CD4-positive, alpha-beta memory T cell (primary cell): ENCODE measurements at regions of chr21 and their contacts with region 1.

Region 1: GRCh38 chr21:42400525-42400924 is 3.2 kb upstream of the UBASH3A start:
- DNase-seq: peak in 1 of 5 donors; percentile 61
- H3K4me3 ChIP-seq: no peak overlapping the region
- H3K4me3 Mint-ChIP-seq: peak overlapping the region in 5 of 8 donors; percentile 19 to 71 (median 53)
- H3K27ac ChIP-seq: no peak overlapping the region
- H3K27ac Mint-ChIP-seq: peak overlapping the region; percentile 42 to 92 (median 77)
- H3K4me1 ChIP-seq: peaks cover 57% of the 10 kb centered on the region
- H3K4me1 Mint-ChIP-seq: peaks cover 40 to 81% (median 52%) of the 10 kb centered on the region in 4 donors
- H3K27me3 ChIP-seq: no peaks in the 10 kb centered on the region
- H3K27me3 Mint-ChIP-seq: no peaks in the 10 kb centered on the region

Region 2: GRCh38 chr21:42209819-42210479 is 190.6 kb before region 1 on chr21:
- CTCF ChIA-PET with region 1: no interaction called
- POLR2A ChIA-PET with region 1: no interaction called
- intact Hi-C with region 1: no loop called
- DNase-seq: no peak
- H3K4me3 ChIP-seq: no peak overlapping the region
- H3K4me3 Mint-ChIP-seq: no peak overlapping the region
- H3K27ac ChIP-seq: no peak overlapping the region
- H3K27ac Mint-ChIP-seq: no peak overlapping the region
- H3K4me1 ChIP-seq: no peaks in the 10 kb centered on the region
- H3K4me1 Mint-ChIP-seq: peaks cover 0 to 3% (median under 1%) of the 10 kb centered on the region in 4 donors
- H3K27me3 ChIP-seq: no peaks in the 10 kb centered on the region
- H3K27me3 Mint-ChIP-seq: no peaks in the 10 kb centered on the region

Region 3: DNA sequence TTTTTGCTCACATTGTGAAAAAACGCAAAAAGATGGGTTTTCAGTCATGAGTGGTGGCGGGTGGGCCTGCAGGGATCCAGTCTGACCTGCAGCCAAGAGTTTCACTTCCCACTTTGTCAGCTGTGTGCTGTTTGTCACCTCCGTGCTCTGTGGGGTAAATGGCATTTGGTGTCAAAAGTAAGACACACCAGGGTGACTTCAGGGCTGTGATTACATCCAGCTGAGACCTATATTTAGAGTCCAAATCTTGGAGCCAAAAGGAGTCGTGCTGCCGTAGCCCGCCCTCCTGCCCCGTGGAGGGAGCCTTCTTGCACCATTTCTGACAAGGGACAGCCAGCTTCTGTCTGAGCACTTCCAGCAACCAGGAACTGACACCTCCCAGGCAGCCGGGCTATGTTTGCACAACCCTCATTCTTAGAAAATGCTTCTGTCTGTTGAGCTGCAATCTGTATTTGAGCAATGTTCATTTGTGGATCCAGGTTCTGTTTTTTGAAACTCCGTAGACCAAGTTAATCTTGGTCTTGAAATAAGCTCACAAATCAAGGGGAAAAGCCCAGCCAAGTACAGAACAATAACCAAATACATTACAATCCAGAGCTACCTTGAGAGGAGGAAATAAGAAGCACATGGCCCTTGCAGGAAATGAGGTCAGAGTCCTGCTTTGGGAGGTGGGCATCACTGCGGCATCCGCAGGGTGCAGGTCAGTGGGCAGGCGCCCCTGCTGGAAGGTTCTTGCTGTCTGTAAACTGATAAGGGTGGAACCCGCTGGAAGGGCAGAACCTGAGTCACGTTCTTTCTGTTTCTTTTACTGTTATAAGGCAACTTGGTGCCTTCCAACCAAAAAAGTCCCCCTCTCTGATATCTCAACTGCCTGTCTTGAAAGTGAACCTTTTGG is 167.2 kb before region 1 on chr21:
- CTCF ChIA-PET with region 1: no interaction called
- POLR2A ChIA-PET with region 1: interaction called, 5 read pairs
- intact Hi-C with region 1: loop called (anchors 10 kb)
- DNase-seq: peak; percentile 82 to 98 (median 86)
- H3K4me3 ChIP-seq: no peak overlapping the region
- H3K4me3 Mint-ChIP-seq: peak overlapping the region; percentile 66 to 85 (median 78)
- H3K27ac ChIP-seq: peak overlapping the region; percentile 96
- H3K27ac Mint-ChIP-seq: peak overlapping the region; percentile 93 to 99 (median 97)
- H3K4me1 ChIP-seq: peaks cover 96% of the 10 kb centered on the region
- H3K4me1 Mint-ChIP-seq: peaks cover 61 to 99% (median 89%) of the 10 kb centered on the region in 4 donors
- H3K27me3 ChIP-seq: no peaks in the 10 kb centered on the region
- H3K27me3 Mint-ChIP-seq: no peaks in the 10 kb centered on the region

Region 4: GRCh38 chr21:42319376-42319775 is 81.1 kb before region 1 on chr21:
- CTCF ChIA-PET with region 1: no interaction called
- POLR2A ChIA-PET with region 1: no interaction called
- intact Hi-C with region 1: no loop called
- DNase-seq: no peak
- H3K4me3 ChIP-seq: no peak overlapping the region
- H3K4me3 Mint-ChIP-seq: no peak overlapping the region
- H3K27ac ChIP-seq: no peak overlapping the region
- H3K27ac Mint-ChIP-seq: peak overlapping the region in 1 of 7 donors; percentile 19
- H3K4me1 ChIP-seq: peaks cover 5% of the 10 kb centered on the region
- H3K4me1 Mint-ChIP-seq: peaks cover 0 to 11% (median 4%) of the 10 kb centered on the region in 4 donors
- H3K27me3 ChIP-seq: no peaks in the 10 kb centered on the region
- H3K27me3 Mint-ChIP-seq: peaks cover 5 to 10% of the 10 kb centered on the region in 2 donors

Region 5: GRCh38 chr21:42337830-42338728 is 62.4 kb before region 1 on chr21:
- CTCF ChIA-PET with region 1: interaction called, 8 read pairs
- POLR2A ChIA-PET with region 1: interaction called, 13 read pairs
- intact Hi-C with region 1: no loop called
- DNase-seq: peak; percentile 74 to 81 (median 78)
- H3K4me3 ChIP-seq: no peak overlapping the region
- H3K4me3 Mint-ChIP-seq: peak overlapping the region in 3 of 8 donors; percentile 7 to 41 (median 38)
- H3K27ac ChIP-seq: no peak overlapping the region
- H3K27ac Mint-ChIP-seq: peak overlapping the region in 6 of 7 donors; percentile 18 to 82 (median 50)
- H3K4me1 ChIP-seq: peaks cover 10% of the 10 kb centered on the region
- H3K4me1 Mint-ChIP-seq: peaks cover 5 to 14% (median 8%) of the 10 kb centered on the region in 4 donors
- H3K27me3 ChIP-seq: no peaks in the 10 kb centered on the region
- H3K27me3 Mint-ChIP-seq: peaks cover 2 to 4% of the 10 kb centered on the region in 2 donors

Region 6: GRCh38 chr21:42381334-42381984 is 19.1 kb before region 1 on chr21:
- CTCF ChIA-PET with region 1: interaction called, 15 read pairs
- POLR2A ChIA-PET with region 1: interaction called, 21 read pairs
- intact Hi-C with region 1: no loop called
- DNase-seq: peak in 3 of 5 donors; percentile 15 to 50 (median 24)
- H3K4me3 ChIP-seq: no peak overlapping the region
- H3K4me3 Mint-ChIP-seq: peak overlapping the region in 1 of 8 donors; percentile 10
- H3K27ac ChIP-seq: no peak overlapping the region
- H3K27ac Mint-ChIP-seq: peak overlapping the region in 2 of 7 donors; percentile 3 to 70
- H3K4me1 ChIP-seq: peaks cover 16% of the 10 kb centered on the region
- H3K4me1 Mint-ChIP-seq: peaks cover 9 to 18% (median 10%) of the 10 kb centered on the region in 4 donors
- H3K27me3 ChIP-seq: no peaks in the 10 kb centered on the region
- H3K27me3 Mint-ChIP-seq: no peaks in the 10 kb centered on the region

Region 7: GRCh38 chr21:42414928-42415769 is 14.6 kb after region 1 on chr21:
- CTCF ChIA-PET with region 1: interaction called, 25 read pairs
- POLR2A ChIA-PET with region 1: interaction called, 604 read pairs
- intact Hi-C with region 1: loop called (anchors 2 kb)
- DNase-seq: peak; percentile 84 to 99 (median 85)
- H3K4me3 ChIP-seq: peak overlapping the region in 1 of 2 donors; percentile 25
- H3K4me3 Mint-ChIP-seq: peak overlapping the region; percentile 61 to 88 (median 72)
- H3K27ac ChIP-seq: peak overlapping the region; percentile 92
- H3K27ac Mint-ChIP-seq: peak overlapping the region in 5 of 7 donors; percentile 98 to 100 (median 99)
- H3K4me1 ChIP-seq: peaks cover 86% of the 10 kb centered on the region
- H3K4me1 Mint-ChIP-seq: peaks cover 22 to 57% (median 41%) of the 10 kb centered on the region in 4 donors
- H3K27me3 ChIP-seq: no peaks in the 10 kb centered on the region
- H3K27me3 Mint-ChIP-seq: no peaks in the 10 kb centered on the region

Region 8: DNA sequence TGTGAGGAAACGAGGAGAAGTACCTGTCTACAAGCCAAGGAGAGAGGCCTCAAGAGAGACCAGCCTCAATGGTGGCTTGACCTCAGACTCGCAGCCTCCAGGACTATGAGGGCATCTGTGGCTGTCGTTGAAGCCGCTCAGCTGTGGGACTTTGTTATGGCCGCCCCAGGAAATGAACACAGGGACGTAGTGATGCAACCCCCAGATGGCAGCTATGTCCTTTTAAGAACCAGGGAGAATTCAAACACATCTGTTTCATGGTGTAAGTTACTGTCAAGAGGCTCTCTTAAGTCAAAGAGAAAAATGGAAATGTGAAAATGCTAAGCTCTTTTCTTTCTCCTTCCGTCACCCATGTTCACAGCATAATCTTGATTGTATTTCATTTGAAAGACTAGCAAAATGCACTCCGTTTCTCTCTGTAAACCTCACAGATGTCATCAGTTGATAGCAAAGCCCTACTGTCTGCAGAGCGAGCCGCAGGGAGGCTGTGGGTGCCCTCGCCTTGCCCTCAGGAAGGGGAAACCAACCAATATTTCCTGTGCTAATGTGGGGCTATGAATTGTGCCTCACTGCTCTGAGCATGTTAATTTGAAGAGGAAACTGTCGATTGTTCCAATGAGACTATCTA is 24.5 kb after region 1 on chr21:
- CTCF ChIA-PET with region 1: interaction called, 27 read pairs
- POLR2A ChIA-PET with region 1: interaction called, 604 read pairs
- intact Hi-C with region 1: loop called (anchors 1 kb)
- DNase-seq: peak; percentile 87 to 92 (median 89)
- H3K4me3 ChIP-seq: peak overlapping the region; percentile 5 to 39
- H3K4me3 Mint-ChIP-seq: peak overlapping the region; percentile 57 to 91 (median 78)
- H3K27ac ChIP-seq: peak overlapping the region; percentile 71
- H3K27ac Mint-ChIP-seq: peak overlapping the region; percentile 67 to 96 (median 93)
- H3K4me1 ChIP-seq: peaks cover 84% of the 10 kb centered on the region
- H3K4me1 Mint-ChIP-seq: peaks cover 64 to 81% (median 74%) of the 10 kb centered on the region in 4 donors
- H3K27me3 ChIP-seq: no peaks in the 10 kb centered on the region
- H3K27me3 Mint-ChIP-seq: no peaks in the 10 kb centered on the region

Region 9: GRCh38 chr21:42449296-42449927 is 48.9 kb after region 1 on chr21:
- CTCF ChIA-PET with region 1: interaction called, 4 read pairs
- POLR2A ChIA-PET with region 1: interaction called, 21 read pairs
- intact Hi-C with region 1: no loop called
- DNase-seq: no peak
- H3K4me3 ChIP-seq: no peak overlapping the region
- H3K4me3 Mint-ChIP-seq: no peak overlapping the region
- H3K27ac ChIP-seq: peak overlapping the region; percentile 3
- H3K27ac Mint-ChIP-seq: peak overlapping the region; percentile 88 to 97 (median 93)
- H3K4me1 ChIP-seq: peaks cover 17% of the 10 kb centered on the region
- H3K4me1 Mint-ChIP-seq: peaks cover 12 to 40% (median 25%) of the 10 kb centered on the region in 4 donors
- H3K27me3 ChIP-seq: no peaks in the 10 kb centered on the region
- H3K27me3 Mint-ChIP-seq: no peaks in the 10 kb centered on the region

Region 10: DNA sequence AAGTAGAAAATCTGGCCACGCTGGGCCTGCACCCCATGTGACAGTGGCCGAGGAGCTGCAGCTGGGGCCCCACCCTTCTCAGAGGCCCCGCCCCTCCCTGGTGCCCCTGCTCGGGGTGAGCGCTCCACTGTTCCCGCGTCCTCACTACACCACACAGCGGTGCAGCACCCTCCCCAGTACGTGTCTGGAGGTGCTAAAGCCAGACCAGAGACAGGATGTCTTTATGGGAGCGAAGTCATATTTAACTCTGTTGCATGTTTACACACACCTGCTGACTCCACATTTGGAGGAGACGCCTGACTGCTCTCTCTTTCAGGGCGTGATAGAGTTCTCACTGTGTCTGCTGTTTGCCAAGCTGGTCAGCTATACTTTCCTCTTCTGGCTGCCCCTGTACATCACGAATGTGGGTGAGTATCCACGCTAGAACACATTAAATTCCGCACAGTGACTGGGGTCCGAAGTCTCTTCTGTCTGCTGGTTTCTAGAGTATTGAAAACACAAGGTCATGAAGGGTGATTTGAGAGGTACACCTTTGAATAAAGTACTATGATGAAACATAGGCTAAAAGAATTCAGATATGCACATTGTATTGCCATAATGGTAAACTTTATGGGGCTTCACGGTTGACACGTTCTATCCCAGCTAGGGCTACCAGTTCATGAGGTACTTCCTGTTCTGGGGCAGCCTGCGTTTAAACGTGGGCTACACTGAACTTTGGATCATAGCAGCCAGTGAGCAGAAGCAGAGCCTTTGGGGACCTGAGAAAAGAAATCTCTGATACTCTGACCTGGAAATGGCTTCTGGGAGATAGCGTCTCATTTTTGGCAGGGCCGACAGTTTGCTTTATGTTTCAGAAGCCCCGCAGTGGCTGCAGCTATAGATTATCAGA is 161.5 kb after region 1 on chr21:
- CTCF ChIA-PET with region 1: no interaction called
- POLR2A ChIA-PET with region 1: no interaction called
- intact Hi-C with region 1: no loop called
- DNase-seq: no peak
- H3K4me3 ChIP-seq: no peak overlapping the region
- H3K4me3 Mint-ChIP-seq: no peak overlapping the region
- H3K27ac ChIP-seq: no peak overlapping the region
- H3K27ac Mint-ChIP-seq: peak overlapping the region in 3 of 7 donors; percentile 2 to 63 (median 32)
- H3K4me1 ChIP-seq: no peaks in the 10 kb centered on the region
- H3K4me1 Mint-ChIP-seq: peaks cover 0 to 1% (median 0%) of the 10 kb centered on the region in 4 donors
- H3K27me3 ChIP-seq: no peaks in the 10 kb centered on the region
- H3K27me3 Mint-ChIP-seq: no peaks in the 10 kb centered on the region